Dorsolateral prefrontal cortex (tissue), 120 donors: ENCODE measurements at regions of chr17 and their contacts with region 1.

Region 1: DNA sequence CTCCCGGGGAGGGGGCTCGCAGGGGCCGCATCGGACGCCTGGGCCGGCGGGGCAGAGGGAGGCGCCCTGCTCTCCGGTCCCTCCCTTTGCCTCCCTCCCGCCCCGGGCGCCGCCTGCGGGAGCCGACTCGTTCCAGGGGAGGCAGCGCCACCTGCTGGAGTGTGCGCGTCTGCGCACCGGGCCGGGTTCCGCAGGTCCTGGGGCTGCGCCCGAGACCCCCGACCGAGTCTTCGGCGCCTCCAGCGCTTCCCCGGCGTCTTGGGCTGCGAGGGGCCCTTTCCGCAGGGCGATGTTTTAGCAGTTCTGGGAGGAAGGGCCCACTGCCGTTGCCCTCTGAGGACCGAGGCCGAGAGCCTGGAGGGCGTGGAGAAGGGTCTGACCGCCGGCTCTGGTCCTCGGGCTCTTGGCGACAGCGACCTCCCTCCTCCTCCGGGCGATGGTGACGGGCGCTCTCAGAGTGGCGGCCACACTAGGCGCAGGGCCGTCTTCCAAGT is 106.3 kb downstream of the SEC14L1 start:
- DNase-seq: peak; percentile 68 to 91 (median 78)
- H3K4me3 ChIP-seq: peak overlapping the region; percentile 50 to 93 (median 76)
- H3K27ac ChIP-seq: peak overlapping the region in 52 of 59 donors; percentile 7 to 92 (median 68)
- H3K27me3 ChIP-seq: no peaks in the 10 kb centered on the region
- CTCF ChIP-seq: peak; percentile 87 to 100 (median 99)

Region 2: DNA sequence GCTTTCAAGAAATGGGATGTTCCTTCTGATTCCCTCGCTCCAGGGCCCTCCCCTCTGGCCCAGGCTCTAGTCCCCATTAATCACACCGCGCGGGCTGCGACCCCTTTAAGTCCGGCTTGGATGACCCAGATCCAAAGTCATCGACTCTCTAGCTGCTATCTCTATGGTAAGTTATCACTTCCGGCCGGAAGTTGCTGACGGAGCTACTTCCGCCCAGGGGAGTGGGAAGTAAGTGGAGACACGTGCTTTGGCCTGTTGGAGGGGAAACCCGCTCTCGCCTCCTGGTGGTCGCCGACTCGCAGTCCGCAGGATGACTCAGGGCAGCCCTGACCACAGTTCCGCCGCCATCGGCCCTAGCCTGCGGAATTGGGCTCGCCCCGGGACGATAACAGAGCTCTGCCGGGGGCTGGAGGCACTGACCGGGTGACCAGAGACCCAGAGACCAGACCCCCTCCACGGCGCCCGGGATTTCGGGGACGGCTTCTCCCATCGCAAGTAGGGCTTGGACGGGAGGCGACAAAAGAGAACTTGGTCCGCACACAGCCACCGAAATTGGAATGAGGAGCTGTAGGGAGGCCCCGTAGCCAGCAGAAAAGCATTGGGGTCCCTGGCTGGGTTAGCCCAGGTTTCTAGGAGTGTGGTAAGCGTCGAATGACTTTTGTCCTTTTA is 158.5 kb before region 1 on chr17:
- intact Hi-C with region 1: loop called (anchors 2 kb)
- DNase-seq: peak; percentile 83 to 97 (median 94)
- H3K4me3 ChIP-seq: peak overlapping the region; percentile 47 to 100 (median 88)
- H3K27ac ChIP-seq: peak overlapping the region in 58 of 59 donors; percentile 58 to 96 (median 87)
- H3K27me3 ChIP-seq: no peaks in the 10 kb centered on the region
- CTCF ChIP-seq: peak; percentile 55 to 91 (median 77)

Region 3: GRCh38 chr17:77182205-77183172 is 64.6 kb before region 1 on chr17:
- intact Hi-C with region 1: no loop called
- DNase-seq: no peak
- H3K4me3 ChIP-seq: peak overlapping the region in 1 of 59 donors; percentile 11
- H3K27ac ChIP-seq: peak overlapping the region in 55 of 59 donors; percentile 8 to 85 (median 64)
- H3K27me3 ChIP-seq: no peaks in the 10 kb centered on the region
- CTCF ChIP-seq: no peak